ENCODE measurements at regions of chr4 and their contacts with region 1.

Region 1: GRCh38 chr4:22962295-22962694 is 269.6 kb downstream of the GBA3 start:
- DNase-seq: peak; percentile 30
- H3K4me3 Mint-ChIP-seq: no peak overlapping the region
- H3K27ac Mint-ChIP-seq: peak overlapping the region; percentile 37
- H3K4me1 Mint-ChIP-seq: peaks cover 9% of the 10 kb centered on the region
- H3K27me3 Mint-ChIP-seq: no peaks in the 10 kb centered on the region
- CTCF ChIP-seq: no peak

Region 2: DNA sequence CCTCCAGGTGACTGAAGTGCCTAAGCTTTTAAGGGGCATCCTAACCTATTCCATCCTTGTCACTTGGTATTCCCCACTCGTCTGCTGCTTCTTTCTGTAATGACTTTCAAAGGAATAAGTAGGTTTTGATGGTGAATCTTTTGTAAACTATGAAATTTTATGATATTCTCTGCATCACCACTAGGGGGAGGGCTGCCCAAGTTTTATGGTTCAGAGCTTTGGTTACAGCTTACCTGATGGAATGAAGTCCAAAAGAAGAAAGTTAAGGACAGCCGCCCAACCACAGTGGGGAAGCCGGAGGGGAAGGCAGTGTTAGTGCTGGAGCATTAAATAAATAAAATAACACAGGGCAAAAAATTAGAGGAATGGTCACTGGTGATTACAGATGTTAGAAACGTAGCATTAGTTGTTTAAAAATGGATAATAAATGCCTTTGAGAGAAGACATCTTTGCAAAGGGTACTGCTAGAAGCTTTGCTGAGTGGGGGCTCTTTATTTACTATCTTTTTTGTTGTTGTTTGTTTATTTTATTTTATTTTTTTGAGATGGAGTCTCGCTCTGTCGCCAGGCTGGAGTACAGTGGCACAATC is 64.7 kb before region 1 on chr4:
- CTCF ChIA-PET with region 1: no interaction called
- intact Hi-C with region 1: loop called (anchors 5 kb)
- DNase-seq: peak; percentile 54
- H3K4me3 Mint-ChIP-seq: no peak overlapping the region
- H3K27ac Mint-ChIP-seq: peak overlapping the region; percentile 10
- H3K4me1 Mint-ChIP-seq: peaks cover 9% of the 10 kb centered on the region
- H3K27me3 Mint-ChIP-seq: no peaks in the 10 kb centered on the region
- CTCF ChIP-seq: peak; percentile 34

Region 3: GRCh38 chr4:23084559-23085248 is 122.4 kb after region 1 on chr4:
- CTCF ChIA-PET with region 1: no interaction called
- intact Hi-C with region 1: loop called (anchors 10 kb)
- DNase-seq: peak; percentile 53
- H3K4me3 Mint-ChIP-seq: no peak overlapping the region
- H3K27ac Mint-ChIP-seq: peak overlapping the region; percentile 82
- H3K4me1 Mint-ChIP-seq: peaks cover 9% of the 10 kb centered on the region
- H3K27me3 Mint-ChIP-seq: no peaks in the 10 kb centered on the region
- CTCF ChIP-seq: no peak

Region 4: GRCh38 chr4:23135792-23136645 is 173.7 kb after region 1 on chr4:
- CTCF ChIA-PET with region 1: no interaction called
- intact Hi-C with region 1: loop called (anchors 1 kb)
- DNase-seq: peak; percentile 30
- H3K4me3 Mint-ChIP-seq: no peak overlapping the region
- H3K27ac Mint-ChIP-seq: no peak overlapping the region
- H3K4me1 Mint-ChIP-seq: peaks cover 4% of the 10 kb centered on the region
- H3K27me3 Mint-ChIP-seq: no peaks in the 10 kb centered on the region
- CTCF ChIP-seq: no peak

Region 5: GRCh38 chr4:23333946-23334878 is 371.9 kb after region 1 on chr4:
- CTCF ChIA-PET with region 1: no interaction called
- intact Hi-C with region 1: loop called (anchors 10 kb)
- DNase-seq: peak; percentile 35
- H3K4me3 Mint-ChIP-seq: no peak overlapping the region
- H3K27ac Mint-ChIP-seq: peak overlapping the region; percentile 78
- H3K4me1 Mint-ChIP-seq: peaks cover 11% of the 10 kb centered on the region
- H3K27me3 Mint-ChIP-seq: no peaks in the 10 kb centered on the region
- CTCF ChIP-seq: no peak

Measured in Calu3 (cell line).